OCI-LY7 (cell line): ENCODE measurements at regions of chr18 and their contacts with region 1.

Region 1: GRCh38 chr18:64678048-64678447 is 529.2 kb upstream of the LINC00305 start:
- DNase-seq: peak; percentile 80
- H3K4me3 ChIP-seq: peak overlapping the region; percentile 40
- H3K27ac ChIP-seq: peak overlapping the region; percentile 98
- H3K4me1 ChIP-seq: peaks cover 27% of the 10 kb centered on the region
- CTCF ChIP-seq: no peak

Region 2: GRCh38 chr18:64695851-64696553 is 18.0 kb after region 1 on chr18:
- CTCF ChIA-PET with region 1: no interaction called
- POLR2A ChIA-PET with region 1: interaction called, 13 read pairs
- intact Hi-C with region 1: no loop called
- DNase-seq: peak; percentile 24
- H3K4me3 ChIP-seq: no peak overlapping the region
- H3K27ac ChIP-seq: no peak overlapping the region
- H3K4me1 ChIP-seq: peaks cover 12% of the 10 kb centered on the region
- CTCF ChIP-seq: no peak

Region 3: GRCh38 chr18:64713284-64713683 is 35.2 kb after region 1 on chr18:
- CTCF ChIA-PET with region 1: no interaction called
- POLR2A ChIA-PET with region 1: interaction called, 5 read pairs
- intact Hi-C with region 1: loop called (anchors 5 kb)
- DNase-seq: peak; percentile 87
- H3K4me3 ChIP-seq: peak overlapping the region; percentile 25
- H3K27ac ChIP-seq: peak overlapping the region; percentile 89
- H3K4me1 ChIP-seq: peaks cover 35% of the 10 kb centered on the region
- CTCF ChIP-seq: no peak